ENCODE measurements at regions of chr20 and their contacts with region 1.

Region 1: GRCh38 chr20:23147964-23148730 is 62.0 kb upstream of the CD93 start:
- DNase-seq: peak; percentile 98 to 99 (median 99)
- H3K4me3 ChIP-seq: no peak overlapping the region
- H3K4me3 Mint-ChIP-seq: peak overlapping the region; percentile 76 to 82
- H3K27ac ChIP-seq: peak overlapping the region; percentile 99 to 100
- H3K27ac Mint-ChIP-seq: peak overlapping the region; percentile 99 to 100 (median 100)
- H3K4me1 ChIP-seq: peaks cover 96 to 100% of the 10 kb centered on the region in 2 donors
- H3K4me1 Mint-ChIP-seq: peaks cover 98% of the 10 kb centered on the region
- H3K27me3 ChIP-seq: no peaks in the 10 kb centered on the region
- H3K27me3 Mint-ChIP-seq: peaks cover 0 to 3% (median 3%) of the 10 kb centered on the region in 3 donors
- CTCF ChIP-seq: no peak

Region 2: DNA sequence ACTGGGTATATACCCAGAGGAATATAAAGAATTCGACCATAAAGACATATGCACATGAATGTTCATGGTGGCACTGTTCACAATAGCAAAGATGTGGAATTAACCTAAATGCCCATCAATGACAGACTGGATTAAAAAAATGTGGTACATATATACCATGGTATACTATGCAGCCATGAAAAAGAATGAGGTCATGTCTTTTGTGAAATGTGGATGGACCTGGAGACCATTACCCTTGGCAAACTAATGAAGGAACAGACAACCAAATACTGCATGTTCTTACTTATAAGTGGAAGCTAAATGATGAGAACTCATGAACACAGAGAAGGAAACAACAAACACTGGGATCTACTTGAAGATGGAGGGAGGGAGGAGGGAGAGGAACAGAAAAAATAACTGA is 299.8 kb before region 1 on chr20:
- intact Hi-C with region 1: no loop called
- DNase-seq: no peak
- H3K4me3 ChIP-seq: no peak overlapping the region
- H3K4me3 Mint-ChIP-seq: no peak overlapping the region
- H3K27ac ChIP-seq: no peak overlapping the region
- H3K27ac Mint-ChIP-seq: no peak overlapping the region
- H3K4me1 ChIP-seq: no peaks in the 10 kb centered on the region
- H3K4me1 Mint-ChIP-seq: no peaks in the 10 kb centered on the region
- H3K27me3 ChIP-seq: no peaks in the 10 kb centered on the region
- H3K27me3 Mint-ChIP-seq: peaks cover 3 to 8% (median 8%) of the 10 kb centered on the region in 3 donors
- CTCF ChIP-seq: no peak

Region 3: GRCh38 chr20:23193801-23194382 is 45.7 kb after region 1 on chr20:
- intact Hi-C with region 1: loop called in 1 of 2 experiments (anchors 5 kb)
- DNase-seq: peak; percentile 78 to 84 (median 82)
- H3K4me3 ChIP-seq: no peak overlapping the region
- H3K4me3 Mint-ChIP-seq: no peak overlapping the region
- H3K27ac ChIP-seq: peak overlapping the region in 1 of 2 donors; percentile 60
- H3K27ac Mint-ChIP-seq: peak overlapping the region; percentile 72 to 88 (median 86)
- H3K4me1 ChIP-seq: peaks cover 40 to 52% of the 10 kb centered on the region in 2 donors
- H3K4me1 Mint-ChIP-seq: peaks cover 46% of the 10 kb centered on the region
- H3K27me3 ChIP-seq: no peaks in the 10 kb centered on the region
- H3K27me3 Mint-ChIP-seq: peaks cover 0 to 3% (median 0%) of the 10 kb centered on the region in 3 donors
- CTCF ChIP-seq: no peak

Measured in CD14-positive monocyte (primary cell).